ENCODE measurements at regions of chr19 and their contacts with region 1.

Region 1: GRCh38 chr19:10431943-10432735 is 11.8 kb downstream of the PDE4A start:
- DNase-seq: peak; percentile 61 to 82 (median 68)
- H3K4me3 ChIP-seq: peak overlapping the region in 1 of 2 donors; percentile 43
- H3K4me3 Mint-ChIP-seq: peak overlapping the region; percentile 83 to 96 (median 90)
- H3K27ac ChIP-seq: peak overlapping the region; percentile 50
- H3K27ac Mint-ChIP-seq: peak overlapping the region; percentile 94 to 99 (median 98)
- H3K4me1 ChIP-seq: peaks cover 50% of the 10 kb centered on the region
- H3K4me1 Mint-ChIP-seq: peaks cover 28 to 62% (median 44%) of the 10 kb centered on the region in 4 donors
- H3K27me3 ChIP-seq: no peaks in the 10 kb centered on the region
- H3K27me3 Mint-ChIP-seq: peaks cover 8 to 19% of the 10 kb centered on the region in 2 donors

Region 2: DNA sequence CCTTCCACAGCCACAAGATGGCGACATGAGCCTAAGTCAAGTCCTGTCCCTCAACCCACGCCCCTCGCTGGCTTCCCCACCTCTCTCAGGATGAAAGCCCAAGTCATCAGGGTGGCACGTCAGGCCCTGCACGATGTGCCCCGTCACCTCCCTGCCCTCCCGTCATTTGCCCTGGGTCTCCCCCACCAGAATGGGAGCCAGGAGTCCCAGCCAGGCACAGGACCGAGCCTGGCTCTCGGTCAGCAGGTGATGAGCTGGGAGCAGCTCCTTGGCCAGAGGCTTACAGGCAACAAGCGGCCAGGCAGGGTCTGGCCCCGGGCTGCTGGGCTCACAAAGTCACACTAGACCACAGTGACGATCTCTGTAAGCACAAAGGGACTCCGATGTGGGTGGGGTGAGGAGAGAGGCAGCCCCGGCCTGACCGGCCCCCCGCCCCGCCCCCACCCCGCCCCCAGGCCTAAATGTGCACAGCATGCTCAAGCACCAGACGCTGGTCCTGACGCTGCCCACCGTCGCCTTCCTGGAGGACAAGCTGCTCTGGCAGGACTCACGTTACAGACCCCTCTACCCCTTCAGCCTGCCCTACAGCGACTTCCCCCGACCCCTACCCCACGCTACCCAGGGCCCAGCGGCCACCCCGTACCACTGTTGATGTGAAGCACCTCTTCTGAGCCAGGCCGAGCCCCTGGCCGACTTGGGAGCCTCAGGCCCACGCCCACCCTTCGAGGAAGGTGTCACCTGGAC is 172.8 kb before region 1 on chr19:
- CTCF ChIA-PET with region 1: interaction called, 15 read pairs
- POLR2A ChIA-PET with region 1: no interaction called
- intact Hi-C with region 1: no loop called
- DNase-seq: peak; percentile 82 to 94 (median 86)
- H3K4me3 ChIP-seq: no peak overlapping the region
- H3K4me3 Mint-ChIP-seq: peak overlapping the region in 1 of 8 donors; percentile 68
- H3K27ac ChIP-seq: peak overlapping the region; percentile 16
- H3K27ac Mint-ChIP-seq: peak overlapping the region in 4 of 7 donors; percentile 17 to 76 (median 54)
- H3K4me1 ChIP-seq: peaks cover 20% of the 10 kb centered on the region
- H3K4me1 Mint-ChIP-seq: peaks cover 5 to 17% (median 8%) of the 10 kb centered on the region in 4 donors
- H3K27me3 ChIP-seq: no peaks in the 10 kb centered on the region
- H3K27me3 Mint-ChIP-seq: no peaks in the 10 kb centered on the region

Region 3: DNA sequence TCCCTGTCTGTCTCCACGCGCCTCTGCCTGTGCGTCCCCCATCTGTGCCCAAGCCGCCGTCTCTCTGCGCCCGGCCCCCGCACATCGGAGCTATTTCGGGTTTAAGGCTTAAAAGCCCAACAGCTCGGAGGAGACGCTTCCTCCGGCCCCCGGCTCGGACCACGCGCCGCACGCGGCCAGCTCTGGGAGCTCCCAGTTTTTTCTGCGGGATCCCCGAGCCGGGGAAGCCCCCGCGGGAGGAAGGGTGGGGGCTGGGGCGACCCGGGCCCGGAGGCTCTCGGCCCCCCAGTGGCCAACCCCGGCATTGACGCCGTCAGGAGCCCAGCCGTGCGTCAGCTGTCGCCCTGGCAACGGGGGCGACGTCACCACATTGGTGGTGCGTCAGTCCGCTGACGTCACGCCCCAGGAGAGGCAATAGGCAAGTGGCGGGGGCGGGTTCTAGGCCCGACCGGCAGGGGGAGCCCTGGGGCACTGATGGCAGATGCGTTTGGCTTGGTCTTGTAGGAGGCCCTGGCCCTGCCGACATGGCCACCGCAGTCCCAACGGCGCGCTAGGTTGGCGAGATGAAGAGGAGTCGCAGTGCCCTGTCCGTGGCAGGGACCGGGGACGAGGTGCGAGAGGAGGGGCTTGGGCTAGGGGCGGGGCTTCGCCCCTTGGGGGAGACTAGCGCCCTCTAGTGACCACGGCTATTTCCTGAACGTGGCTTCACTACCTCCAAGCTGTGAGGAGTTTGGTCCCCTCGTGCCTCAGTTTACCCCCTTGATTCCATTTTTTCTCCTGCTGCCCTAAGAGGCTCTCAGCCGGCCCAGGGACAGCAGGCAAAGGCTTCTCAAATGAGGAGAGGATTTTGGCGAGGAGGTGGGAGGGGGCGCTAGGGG is 15.5 kb before region 1 on chr19:
- CTCF ChIA-PET with region 1: interaction called, 117 read pairs
- POLR2A ChIA-PET with region 1: interaction called, 470 read pairs
- intact Hi-C with region 1: loop called (anchors 2 kb)
- DNase-seq: peak; percentile 97 to 99 (median 98)
- H3K4me3 ChIP-seq: peak overlapping the region in 1 of 2 donors; percentile 47
- H3K4me3 Mint-ChIP-seq: peak overlapping the region; percentile 65 to 85 (median 76)
- H3K27ac ChIP-seq: peak overlapping the region; percentile 49
- H3K27ac Mint-ChIP-seq: peak overlapping the region; percentile 87 to 99 (median 95)
- H3K4me1 ChIP-seq: peaks cover 72% of the 10 kb centered on the region
- H3K4me1 Mint-ChIP-seq: peaks cover 23 to 66% (median 46%) of the 10 kb centered on the region in 4 donors
- H3K27me3 ChIP-seq: peaks cover 43% of the 10 kb centered on the region
- H3K27me3 Mint-ChIP-seq: peaks cover 31 to 35% of the 10 kb centered on the region in 2 donors